ENCODE measurements at regions of chr3 and their contacts with region 1.

Region 1: GRCh38 chr3:142366436-142366835 is 81.4 kb downstream of the XRN1 start:
- DNase-seq: peak; percentile 45
- ATAC-seq: peak; percentile 45
- H3K4me3 ChIP-seq: no peak overlapping the region
- H3K27ac ChIP-seq: no peak overlapping the region
- H3K4me1 ChIP-seq: peaks cover 11% of the 10 kb centered on the region; the same call in 1 of the 2 replicates
- H3K27me3 ChIP-seq: no peaks in the 10 kb centered on the region
- CTCF ChIP-seq: peak; percentile 63

Region 2: DNA sequence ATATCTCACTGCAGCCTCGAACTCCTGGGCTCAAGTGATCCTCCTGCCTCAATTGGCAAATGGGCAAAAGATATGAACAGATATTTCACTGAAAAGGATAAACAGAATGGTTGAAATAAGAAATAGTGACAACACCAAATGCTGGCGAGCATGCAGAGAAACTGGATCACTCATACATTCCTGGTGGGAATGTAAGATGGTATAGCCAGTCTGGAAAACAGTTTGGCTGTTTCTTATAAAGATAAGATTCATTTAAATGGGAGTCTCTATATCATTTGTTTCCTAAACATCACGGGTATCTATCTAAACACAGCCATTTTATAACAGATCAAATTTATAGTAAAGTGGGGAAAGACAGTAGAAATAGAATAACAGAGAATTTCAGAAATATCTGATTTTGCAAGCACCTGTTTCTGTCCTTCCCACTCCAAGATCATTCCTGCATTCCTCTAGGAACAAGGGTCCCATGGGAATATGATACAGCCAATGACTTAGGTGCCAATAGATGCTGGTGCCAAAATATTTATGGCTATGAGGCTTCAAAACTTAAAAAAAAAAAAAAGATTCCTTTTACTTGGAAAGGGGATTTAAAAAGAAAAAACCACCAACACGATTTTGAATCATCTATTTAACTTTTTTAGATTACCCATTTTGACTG is 207.2 kb before region 1 on chr3:
- CTCF ChIA-PET with region 1: no interaction called
- POLR2A ChIA-PET with region 1: no interaction called
- intact Hi-C with region 1: no loop called
- DNase-seq: no peak
- ATAC-seq: no peak
- H3K4me3 ChIP-seq: no peak overlapping the region
- H3K27ac ChIP-seq: no peak overlapping the region
- H3K4me1 ChIP-seq: no peaks in the 10 kb centered on the region
- H3K27me3 ChIP-seq: no peaks in the 10 kb centered on the region
- CTCF ChIP-seq: no peak

Region 3: GRCh38 chr3:142315083-142315482 is 51.4 kb before region 1 on chr3:
- CTCF ChIA-PET with region 1: no interaction called
- POLR2A ChIA-PET with region 1: no interaction called
- intact Hi-C with region 1: loop called (anchors 5 kb)
- DNase-seq: peak; percentile 69
- ATAC-seq: peak; percentile 69
- H3K4me3 ChIP-seq: no peak overlapping the region
- H3K27ac ChIP-seq: no peak overlapping the region
- H3K4me1 ChIP-seq: peaks cover 19% of the 10 kb centered on the region
- H3K27me3 ChIP-seq: no peaks in the 10 kb centered on the region
- CTCF ChIP-seq: no peak

Region 4: GRCh38 chr3:143010024-143010423 is 643.6 kb after region 1 on chr3:
- CTCF ChIA-PET with region 1: no interaction called
- POLR2A ChIA-PET with region 1: no interaction called
- intact Hi-C with region 1: no loop called
- DNase-seq: no peak
- ATAC-seq: no peak; the same call in 1 of the 2 replicates
- H3K4me3 ChIP-seq: no peak overlapping the region
- H3K27ac ChIP-seq: no peak overlapping the region
- H3K4me1 ChIP-seq: peaks cover 3% of the 10 kb centered on the region; the same call in 1 of the 2 replicates
- H3K27me3 ChIP-seq: no peaks in the 10 kb centered on the region
- CTCF ChIP-seq: no peak